BJ (cell line): ENCODE measurements at regions of chr11 and their contacts with region 1.

Region 1: GRCh38 chr11:107689317-107690202 is 22.3 kb downstream of the SLN start:
- DNase-seq: no peak
- H3K4me3 ChIP-seq: no peak overlapping the region
- H3K27me3 ChIP-seq: 0 out of 2 replicates have a peak, but pooled peaks cover 1% of the 10 kb centered on the region
- CTCF ChIP-seq: peak; percentile 75

Region 2: DNA sequence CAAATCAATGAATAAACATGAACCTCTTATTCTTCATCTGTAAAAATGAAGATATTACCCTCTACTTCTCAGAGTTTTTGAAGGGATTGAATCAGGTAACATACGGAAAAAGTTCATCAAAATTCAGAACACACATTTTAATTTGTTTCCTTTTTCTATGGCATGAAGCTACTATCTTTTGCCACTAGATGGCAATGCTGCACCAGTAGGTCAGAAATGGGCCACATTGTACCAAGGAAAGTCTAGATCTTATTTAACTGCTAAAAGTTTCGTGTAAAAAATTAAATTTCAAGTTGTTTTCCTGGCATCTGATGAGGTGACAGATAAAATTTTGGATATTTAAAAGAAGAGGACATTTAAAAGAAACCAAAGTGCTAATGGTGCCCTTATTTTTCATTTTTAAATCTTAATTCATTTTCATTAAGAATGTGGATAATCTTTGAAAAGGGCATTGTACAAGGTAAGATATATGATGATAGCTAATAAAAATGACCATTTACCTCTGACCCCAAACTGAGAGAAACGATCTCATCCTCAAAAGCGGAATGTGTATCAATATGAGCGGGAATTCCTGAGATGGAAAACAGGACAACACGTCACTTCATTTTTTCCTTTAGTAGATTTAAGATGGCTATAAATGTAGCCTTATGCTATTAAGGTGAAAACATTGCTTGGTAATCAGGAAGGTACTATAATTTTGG is 140.2 kb before region 1 on chr11:
- CTCF ChIA-PET with region 1: interaction called, 45 read pairs
- POLR2A ChIA-PET with region 1: interaction called, 3 read pairs
- DNase-seq: no peak
- H3K4me3 ChIP-seq: no peak overlapping the region
- H3K27me3 ChIP-seq: no peaks in the 10 kb centered on the region
- CTCF ChIP-seq: peak; percentile 81

Region 3: DNA sequence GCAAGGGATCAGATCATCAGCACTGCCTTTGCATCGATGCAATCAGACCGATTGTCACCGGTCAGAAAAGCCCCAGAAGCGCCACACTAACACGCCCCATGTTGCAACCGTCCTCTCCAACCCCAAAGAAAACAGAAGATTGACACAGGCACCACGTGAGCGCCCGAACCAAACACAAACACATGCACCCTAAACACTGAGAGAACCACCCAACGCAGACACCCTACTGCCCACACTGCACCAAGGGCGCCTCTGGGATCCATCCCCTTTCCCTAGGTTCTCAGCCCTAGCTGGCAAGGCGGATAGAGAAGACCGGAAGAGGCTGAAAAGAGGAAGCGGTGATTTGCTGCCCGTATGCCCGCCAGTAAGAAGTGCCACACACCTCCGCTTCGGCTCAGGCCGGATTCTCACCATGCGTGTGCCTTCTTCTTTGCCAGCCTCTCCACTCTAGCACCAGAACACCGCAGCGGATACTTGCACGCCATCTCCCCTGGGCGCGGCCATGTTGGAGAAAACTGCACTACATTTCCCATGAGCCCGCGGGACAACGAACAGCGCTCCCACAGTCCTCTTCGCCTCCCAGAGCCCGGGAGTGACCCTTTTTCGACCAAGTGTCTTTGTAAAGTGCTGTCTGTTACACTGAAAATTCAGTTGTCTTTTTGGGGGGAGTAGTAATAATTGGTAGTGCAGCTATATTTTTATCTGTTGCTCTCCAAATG is 124.2 kb before region 1 on chr11 and contains the start of gene ALKBH8:
- CTCF ChIA-PET with region 1: interaction called, 41 read pairs
- POLR2A ChIA-PET with region 1: no interaction called
- DNase-seq: no peak
- H3K4me3 ChIP-seq: peak within 1 kb of the TSS; percentile 87
- H3K27me3 ChIP-seq: peaks cover 3% of the 10 kb centered on the region; the same call in 1 of the 2 replicates
- CTCF ChIP-seq: 0 out of 2 replicates have a peak, but pooled peaks have one; percentile 1
- polyA plus RNA-seq, gene ALKBH8: 2.9 and 5.6 TPM in 2 replicates

Region 4: GRCh38 chr11:107573438-107573837 is 116.1 kb before region 1 on chr11:
- CTCF ChIA-PET with region 1: interaction called, 84 read pairs
- POLR2A ChIA-PET with region 1: no interaction called
- DNase-seq: no peak
- H3K4me3 ChIP-seq: no peak overlapping the region
- H3K27me3 ChIP-seq: peaks cover 5% of the 10 kb centered on the region
- CTCF ChIP-seq: no peak

Region 5: DNA sequence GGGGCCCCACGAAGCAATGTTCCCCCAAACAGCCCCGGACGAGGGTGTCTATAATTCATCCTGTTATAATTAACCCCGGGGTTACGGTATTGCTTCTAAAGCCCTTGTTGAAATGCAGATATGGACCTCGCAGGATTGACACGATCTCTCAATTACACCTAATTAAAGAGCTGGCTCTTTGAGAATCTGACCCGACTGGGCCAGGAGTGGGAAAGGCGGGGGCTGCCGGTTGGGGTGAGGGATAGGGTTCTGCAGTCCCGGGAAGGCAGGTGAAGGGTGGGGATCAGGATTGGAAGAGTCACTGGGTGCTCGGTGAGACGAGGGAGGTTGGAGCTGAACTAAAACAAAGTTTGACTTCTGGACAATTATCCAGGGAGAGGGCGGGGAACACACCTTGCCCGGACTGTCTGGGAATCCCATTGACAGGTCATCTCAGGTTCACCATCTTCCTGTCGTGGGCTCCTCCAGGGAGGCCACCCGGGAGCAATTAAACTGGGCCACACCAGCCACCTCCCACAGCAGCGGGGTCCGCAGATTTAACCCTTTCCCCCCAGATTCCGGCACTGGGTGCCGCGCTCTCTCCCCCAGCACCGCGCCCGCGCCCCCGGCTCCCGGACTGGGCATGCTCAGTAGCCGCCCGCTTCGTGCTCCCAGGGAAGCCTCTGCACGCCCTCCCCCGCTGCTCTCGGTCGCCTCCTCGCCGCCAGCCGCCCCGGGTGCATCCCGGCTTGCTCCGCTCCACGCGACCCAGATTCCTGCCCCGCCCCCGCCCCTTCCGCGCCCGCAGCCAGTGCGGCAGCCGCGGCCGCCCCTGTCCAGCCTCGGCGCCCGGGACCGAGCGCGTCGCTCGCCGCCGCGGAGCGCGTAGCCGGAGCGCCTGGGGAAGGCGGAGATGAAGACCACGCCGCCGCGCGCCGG is 98.8 kb before region 1 on chr11 and contains the start of gene ELMOD1:
- CTCF ChIA-PET with region 1: interaction called, 22 read pairs
- POLR2A ChIA-PET with region 1: no interaction called
- DNase-seq: no peak
- H3K4me3 ChIP-seq: peak within 1 kb of the TSS; percentile 60
- H3K27me3 ChIP-seq: peaks cover 33% of the 10 kb centered on the region
- CTCF ChIP-seq: peak; percentile 24; the same call in 1 of the 2 replicates
- polyA plus RNA-seq, gene ELMOD1: 0.04 and 0.05 TPM in 2 replicates

Region 6: GRCh38 chr11:107770551-107770951 is 81.0 kb after region 1 on chr11:
- CTCF ChIA-PET with region 1: interaction called, 38 read pairs
- POLR2A ChIA-PET with region 1: no interaction called
- DNase-seq: peak; percentile 16
- H3K4me3 ChIP-seq: no peak overlapping the region
- H3K27me3 ChIP-seq: no peaks in the 10 kb centered on the region; the same call in 1 of the 2 replicates
- CTCF ChIP-seq: no peak